ENCODE measurements at regions of chr1 and their contacts with region 1.

Region 1: DNA sequence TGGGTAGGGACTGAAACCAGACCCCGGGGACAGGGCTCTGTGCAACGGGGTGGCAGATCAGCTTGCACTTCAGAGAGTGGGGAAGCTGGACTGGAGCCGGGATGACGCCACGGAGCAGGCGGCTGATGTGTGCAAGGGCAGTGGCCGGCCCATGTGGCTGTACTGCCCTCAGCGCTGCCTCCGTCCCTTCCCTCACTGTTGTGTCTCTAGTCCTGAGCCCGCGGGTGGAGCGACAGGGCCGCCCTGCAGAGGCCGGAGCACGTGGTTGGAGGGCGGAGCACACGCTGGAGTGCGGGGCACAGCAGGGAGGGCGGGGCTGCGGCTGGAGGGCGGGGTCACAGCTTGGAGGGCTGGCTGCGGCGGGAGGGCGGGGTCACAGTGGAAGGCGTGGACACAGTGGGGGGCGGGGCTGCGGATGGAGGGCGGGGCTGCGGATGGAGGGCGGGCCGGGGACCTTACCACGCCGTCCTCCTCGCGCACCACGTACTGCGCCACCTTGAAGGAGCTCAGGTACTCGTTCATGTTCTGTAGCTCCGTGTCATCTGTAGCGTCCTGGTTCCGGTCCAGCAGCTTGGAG is 52.4 kb downstream of the CHD5 start:
- DNase-seq: peak; percentile 90
- H3K4me3 Mint-ChIP-seq: no peak overlapping the region
- H3K27ac Mint-ChIP-seq: no peak overlapping the region
- H3K4me1 Mint-ChIP-seq: no peaks in the 10 kb centered on the region
- H3K27me3 Mint-ChIP-seq: no peaks in the 10 kb centered on the region

Region 2: GRCh38 chr1:5758000-5758858 is 369.4 kb before region 1 on chr1:
- intact Hi-C with region 1: no loop called
- DNase-seq: no peak
- H3K4me3 Mint-ChIP-seq: no peak overlapping the region
- H3K27ac Mint-ChIP-seq: no peak overlapping the region
- H3K4me1 Mint-ChIP-seq: no peaks in the 10 kb centered on the region
- H3K27me3 Mint-ChIP-seq: no peaks in the 10 kb centered on the region

Region 3: DNA sequence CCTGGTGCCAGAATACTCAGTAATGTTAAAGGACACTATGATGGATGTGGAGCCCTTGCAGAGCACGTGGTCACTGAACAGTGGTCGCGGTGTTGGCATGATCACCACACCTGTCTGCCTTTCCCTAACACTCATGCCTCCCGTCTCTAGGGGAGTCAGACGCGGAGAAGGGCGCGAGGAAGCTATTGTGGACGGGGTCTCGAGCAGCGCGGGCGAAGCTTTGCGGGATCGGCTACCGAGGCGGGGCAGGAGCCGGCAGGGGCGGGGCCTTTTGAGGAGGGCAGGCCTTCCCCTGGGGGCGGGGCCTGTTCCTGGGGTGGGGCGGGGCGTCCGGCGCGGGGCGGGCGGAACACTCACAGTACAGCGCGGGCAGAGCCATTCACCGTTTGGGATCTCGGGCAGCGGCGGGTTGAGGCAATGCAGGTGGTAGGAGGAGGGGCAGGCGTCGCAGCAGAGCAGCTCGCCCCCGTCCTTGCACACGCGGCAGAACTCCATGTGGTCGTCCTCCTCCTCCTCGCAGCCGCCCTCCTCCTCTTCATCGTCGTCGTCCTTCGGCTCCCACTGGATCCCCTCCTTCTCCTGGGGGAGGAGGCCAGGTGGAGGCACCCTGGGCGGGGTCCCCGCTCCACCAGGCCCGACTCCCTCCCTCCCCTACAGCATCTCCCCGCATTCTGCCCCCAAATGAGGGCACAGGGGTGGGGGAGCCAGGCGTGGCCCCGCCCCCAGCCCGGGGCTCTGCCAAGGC is 21.0 kb after region 1 on chr1:
- intact Hi-C with region 1: loop called (anchors 2 kb)
- DNase-seq: peak; percentile 89
- H3K4me3 Mint-ChIP-seq: no peak overlapping the region
- H3K27ac Mint-ChIP-seq: no peak overlapping the region
- H3K4me1 Mint-ChIP-seq: peaks cover 2% of the 10 kb centered on the region
- H3K27me3 Mint-ChIP-seq: peaks cover 2% of the 10 kb centered on the region

Measured in activated CD4-positive, alpha-beta T cell treated with anti-CD3 and anti-CD28 coated beads, Interleukin-2, amount 10 ng/mL, durations not matched to agents 24 days and 14 days (primary cell).